CD8-positive, alpha-beta memory T cell (primary cell): ENCODE measurements at regions of chr12 and their contacts with region 1.

Region 1: DNA sequence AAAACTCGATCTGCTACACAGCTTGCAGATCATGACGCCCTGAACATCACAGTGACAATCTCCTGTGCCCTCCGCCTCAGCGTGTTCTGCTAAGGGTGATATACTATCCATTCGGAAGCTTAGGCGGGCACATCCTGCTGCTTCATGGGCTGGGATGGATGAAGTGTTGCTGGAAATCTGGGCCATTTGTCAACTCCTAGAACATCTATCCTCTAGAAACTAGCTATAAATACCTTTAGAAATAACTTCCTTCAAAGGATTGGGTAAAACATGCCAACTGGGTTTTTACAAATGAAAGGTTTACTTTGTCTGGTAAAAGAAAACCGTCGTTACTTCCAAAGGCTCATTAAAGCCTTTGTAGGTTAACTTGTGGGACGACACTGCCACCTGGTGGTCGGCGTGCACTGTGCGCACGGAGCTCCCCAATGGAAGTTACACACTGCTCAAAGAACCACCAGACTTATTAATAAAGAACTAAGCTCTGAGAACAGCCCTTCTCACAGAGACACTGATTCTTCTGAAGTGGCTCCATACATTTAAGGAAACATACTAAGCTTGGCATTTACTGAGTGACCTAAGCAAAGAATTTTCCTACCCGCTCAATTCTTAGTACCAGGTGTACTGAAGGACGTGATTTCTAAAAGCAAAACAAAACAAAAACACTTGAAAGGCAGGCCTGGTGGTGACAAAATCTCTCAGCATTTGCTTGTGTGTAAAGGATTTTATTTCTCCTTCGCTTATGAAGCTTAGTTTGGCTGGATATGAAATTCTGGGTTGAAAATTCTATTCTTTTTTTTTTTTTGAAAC is 21.6 kb upstream of the CACNA2D4 start:
- DNase-seq: peak; percentile 75 to 90 (median 85)
- H3K4me3 ChIP-seq: no peak overlapping the region
- H3K4me3 Mint-ChIP-seq: no peak overlapping the region
- H3K27ac ChIP-seq: no peak overlapping the region
- H3K27ac Mint-ChIP-seq: peak overlapping the region in 5 of 8 donors; percentile 24 to 70 (median 61)
- H3K4me1 ChIP-seq: peaks cover 6% of the 10 kb centered on the region
- H3K4me1 Mint-ChIP-seq: peaks cover 4 to 11% (median 5%) of the 10 kb centered on the region in 3 donors
- H3K27me3 ChIP-seq: no peaks in the 10 kb centered on the region
- H3K27me3 Mint-ChIP-seq: no peaks in the 10 kb centered on the region

Region 2: DNA sequence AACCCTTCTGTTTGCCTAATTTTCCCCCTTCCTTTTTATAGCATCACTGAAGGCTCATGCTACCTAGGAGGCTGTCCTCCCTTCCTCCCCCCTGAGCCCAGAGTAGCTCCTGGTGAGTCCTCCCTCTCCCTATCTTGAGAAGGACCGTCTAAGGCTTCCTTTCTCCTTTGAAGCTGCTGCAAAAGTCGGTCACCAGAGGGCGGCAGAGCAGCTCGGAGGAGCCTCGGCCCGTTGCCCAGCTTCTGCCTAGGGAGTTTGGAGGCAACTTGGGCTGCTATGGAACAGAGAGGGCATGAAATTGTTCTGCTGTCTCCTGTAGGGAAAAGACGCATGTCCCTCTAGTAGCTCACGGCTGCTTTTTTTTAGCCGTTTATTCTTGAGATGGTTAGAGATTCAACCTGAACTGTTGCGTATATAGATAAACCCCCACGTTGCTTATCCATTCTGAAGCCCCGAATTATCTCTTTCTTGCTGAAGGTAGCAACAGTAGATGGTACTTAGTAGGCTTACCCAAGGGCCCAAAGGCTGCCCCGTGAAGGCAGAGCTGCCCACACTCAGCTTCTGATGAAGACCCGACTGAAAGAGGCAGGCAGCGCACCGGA is 305.3 kb before region 1 on chr12:
- CTCF ChIA-PET with region 1: interaction called, 17 read pairs
- POLR2A ChIA-PET with region 1: no interaction called
- DNase-seq: peak; percentile 22 to 66 (median 40)
- H3K4me3 ChIP-seq: no peak overlapping the region
- H3K4me3 Mint-ChIP-seq: no peak overlapping the region
- H3K27ac ChIP-seq: no peak overlapping the region
- H3K27ac Mint-ChIP-seq: no peak overlapping the region
- H3K4me1 ChIP-seq: no peaks in the 10 kb centered on the region
- H3K4me1 Mint-ChIP-seq: peaks cover 6 to 14% (median 13%) of the 10 kb centered on the region in 3 donors
- H3K27me3 ChIP-seq: peaks cover 13% of the 10 kb centered on the region
- H3K27me3 Mint-ChIP-seq: peaks cover 24 to 68% of the 10 kb centered on the region in 2 donors

Region 3: GRCh38 chr12:1661553-1662335 is 278.3 kb before region 1 on chr12:
- CTCF ChIA-PET with region 1: interaction called, 20 read pairs
- POLR2A ChIA-PET with region 1: interaction called, 3 read pairs
- DNase-seq: peak; percentile 85 to 93 (median 86)
- H3K4me3 ChIP-seq: peak overlapping the region; percentile 37
- H3K4me3 Mint-ChIP-seq: peak overlapping the region; percentile 78 to 89 (median 82)
- H3K27ac ChIP-seq: no peak overlapping the region
- H3K27ac Mint-ChIP-seq: peak overlapping the region; percentile 64 to 95 (median 86)
- H3K4me1 ChIP-seq: peaks cover 7% of the 10 kb centered on the region
- H3K4me1 Mint-ChIP-seq: peaks cover 31 to 55% (median 39%) of the 10 kb centered on the region in 3 donors
- H3K27me3 ChIP-seq: no peaks in the 10 kb centered on the region
- H3K27me3 Mint-ChIP-seq: peaks cover 0 to 2% of the 10 kb centered on the region in 2 donors

Region 4: DNA sequence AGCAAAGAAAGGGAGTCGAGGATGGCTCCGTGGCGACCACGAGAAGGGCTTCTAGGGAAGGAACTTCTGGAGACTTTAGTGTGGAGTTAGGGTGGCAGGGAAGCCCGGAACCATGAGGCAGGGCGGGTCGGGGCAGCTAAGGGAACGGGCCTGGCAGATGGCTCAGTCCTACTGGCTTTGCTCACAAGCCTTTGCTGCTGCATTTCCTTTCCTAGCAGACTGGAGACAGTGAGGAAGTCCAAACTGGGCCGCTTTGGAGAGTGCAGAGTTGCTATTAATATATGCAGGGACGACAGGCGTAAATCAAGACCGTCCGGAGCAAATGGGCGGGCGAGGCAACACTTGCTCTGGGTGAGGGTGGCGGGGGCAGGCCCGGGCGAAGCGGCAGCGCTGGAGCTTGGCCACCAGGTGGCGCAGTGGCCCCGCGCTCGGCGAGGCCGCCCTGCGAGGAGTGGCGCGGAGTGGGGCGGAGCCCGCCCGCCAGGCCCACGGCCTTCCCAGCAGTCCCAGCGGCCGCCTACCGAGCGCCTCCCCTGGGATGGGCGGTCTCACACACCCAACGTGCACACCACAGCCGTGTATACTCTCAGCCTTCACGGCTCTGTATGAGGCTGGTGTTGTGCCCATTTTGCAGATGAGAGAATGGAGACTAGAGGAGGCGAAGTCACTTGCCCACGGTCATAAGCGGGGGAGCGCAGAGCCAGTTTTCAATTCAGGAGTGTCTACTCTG is 144.1 kb before region 1 on chr12:
- CTCF ChIA-PET with region 1: interaction called, 161 read pairs
- POLR2A ChIA-PET with region 1: interaction called, 20 read pairs
- DNase-seq: peak; percentile 90 to 94 (median 92)
- H3K4me3 ChIP-seq: peak overlapping the region; percentile 88
- H3K4me3 Mint-ChIP-seq: peak overlapping the region; percentile 90 to 94 (median 92)
- H3K27ac ChIP-seq: peak overlapping the region; percentile 69
- H3K27ac Mint-ChIP-seq: peak overlapping the region; percentile 76 to 96 (median 88)
- H3K4me1 ChIP-seq: peaks cover 15% of the 10 kb centered on the region
- H3K4me1 Mint-ChIP-seq: peaks cover 17 to 22% (median 18%) of the 10 kb centered on the region in 3 donors
- H3K27me3 ChIP-seq: no peaks in the 10 kb centered on the region
- H3K27me3 Mint-ChIP-seq: no peaks in the 10 kb centered on the region

Region 5: DNA sequence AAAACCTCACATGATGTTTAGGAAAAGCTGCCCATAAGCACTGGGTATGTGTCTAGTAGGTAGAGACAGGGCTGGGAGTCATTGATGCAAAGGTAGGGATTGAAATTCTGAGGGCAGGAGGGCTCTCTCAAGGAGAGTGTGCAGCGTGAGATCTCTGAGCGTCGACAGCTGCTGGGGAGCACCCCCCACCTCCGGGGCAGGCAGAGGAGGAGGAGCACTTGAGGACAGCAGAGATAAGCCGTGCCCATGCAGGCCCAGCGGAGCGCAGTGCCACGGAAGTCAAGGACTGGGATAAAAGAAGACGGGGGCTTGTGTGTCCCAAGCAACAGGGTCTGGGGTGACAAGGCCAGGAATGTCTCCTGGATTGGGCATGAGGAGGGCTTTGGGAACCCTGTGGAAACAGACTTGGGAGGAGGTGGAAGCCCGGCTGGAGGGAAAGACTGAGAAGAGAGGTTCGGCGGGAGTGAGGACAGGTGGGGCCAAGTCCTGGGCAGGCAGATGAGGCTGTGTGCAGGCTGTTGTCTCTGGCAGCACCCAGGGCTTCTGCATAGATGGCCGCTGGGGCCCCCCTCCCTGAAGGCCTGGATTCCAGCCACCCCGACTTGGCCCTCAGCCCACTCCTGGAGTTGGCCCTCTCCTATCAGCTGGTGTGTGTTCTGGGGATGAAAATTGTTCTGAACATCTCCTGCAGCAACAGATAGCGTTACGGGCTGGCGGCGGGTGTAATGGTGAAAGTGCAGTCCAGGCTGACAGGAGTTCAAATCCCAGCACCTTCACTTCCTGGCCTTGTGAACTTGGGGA is 23.4 kb before region 1 on chr12:
- CTCF ChIA-PET with region 1: interaction called, 12 read pairs
- POLR2A ChIA-PET with region 1: no interaction called
- DNase-seq: peak in 1 of 5 donors; percentile 38
- H3K4me3 ChIP-seq: no peak overlapping the region
- H3K4me3 Mint-ChIP-seq: peak overlapping the region in 2 of 7 donors; percentile 24 to 66
- H3K27ac ChIP-seq: no peak overlapping the region
- H3K27ac Mint-ChIP-seq: peak overlapping the region in 4 of 8 donors; percentile 48 to 74 (median 59)
- H3K4me1 ChIP-seq: peaks cover 25% of the 10 kb centered on the region
- H3K4me1 Mint-ChIP-seq: peaks cover 18 to 25% (median 25%) of the 10 kb centered on the region in 3 donors
- H3K27me3 ChIP-seq: no peaks in the 10 kb centered on the region
- H3K27me3 Mint-ChIP-seq: peaks cover 4 to 13% of the 10 kb centered on the region in 2 donors